Activated CD8-positive, alpha-beta T cell treated with anti-CD3 and anti-CD28 coated beads for 36 hours (primary cell): ENCODE measurements at regions of chr3 and their contacts with region 1.

Region 1: DNA sequence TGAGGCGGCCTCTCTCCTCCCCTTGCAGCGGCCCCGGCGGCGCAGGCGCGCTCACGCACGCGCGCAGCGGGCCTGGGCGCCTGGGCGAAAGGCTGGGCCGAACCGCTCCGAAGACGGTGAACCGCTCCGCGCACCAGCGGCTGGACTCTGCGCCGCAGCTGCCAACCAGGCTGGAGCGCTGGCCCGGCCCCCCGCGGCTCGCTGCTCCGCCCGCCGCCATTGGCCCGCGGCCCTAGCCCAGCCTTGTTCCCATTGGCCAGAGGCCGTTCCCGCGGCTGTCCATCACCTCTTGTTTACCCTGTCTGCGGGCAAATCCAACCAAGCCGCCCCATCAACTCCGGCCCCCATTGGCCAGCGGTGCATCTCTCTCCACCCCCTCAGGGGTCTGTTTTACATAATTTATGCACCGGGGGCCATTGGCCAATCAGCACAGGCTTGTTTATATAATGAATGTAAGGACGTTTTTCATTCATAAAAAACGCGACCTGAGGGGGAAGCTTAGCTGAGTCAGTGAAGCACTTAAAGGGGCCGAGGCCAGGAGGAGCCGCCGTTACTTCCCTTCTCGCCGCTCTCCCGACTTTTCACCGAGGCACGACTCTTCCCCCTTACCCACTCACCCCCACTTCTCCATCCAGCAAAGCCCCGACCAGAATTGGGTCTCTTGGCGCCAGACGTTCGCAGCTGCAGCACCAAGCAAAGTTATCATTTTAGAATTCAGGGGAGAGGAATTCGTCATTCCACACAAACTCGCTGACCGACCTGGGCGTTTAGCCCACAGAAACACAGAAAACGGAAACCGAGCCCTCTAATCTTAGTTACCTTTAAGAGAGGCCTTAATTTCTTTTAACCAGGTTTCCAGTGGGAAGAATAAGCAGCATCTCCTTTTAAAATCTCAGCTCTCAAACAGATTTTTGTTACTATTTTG is at the start of gene ETV5:
- DNase-seq: peak; percentile 98
- ATAC-seq: peak; percentile 97
- H3K4me3 Mint-ChIP-seq: peak within 1 kb of the TSS; percentile 89
- H3K27ac Mint-ChIP-seq: peak within 1 kb of the TSS; percentile 48
- H3K4me1 Mint-ChIP-seq: peaks cover 34% of the 10 kb centered on the region
- H3K27me3 Mint-ChIP-seq: peaks cover 78% of the 10 kb centered on the region
- CTCF ChIP-seq: no peak
- total RNA-seq, gene ETV5: 0.68 to 1.4 TPM

Region 2: DNA sequence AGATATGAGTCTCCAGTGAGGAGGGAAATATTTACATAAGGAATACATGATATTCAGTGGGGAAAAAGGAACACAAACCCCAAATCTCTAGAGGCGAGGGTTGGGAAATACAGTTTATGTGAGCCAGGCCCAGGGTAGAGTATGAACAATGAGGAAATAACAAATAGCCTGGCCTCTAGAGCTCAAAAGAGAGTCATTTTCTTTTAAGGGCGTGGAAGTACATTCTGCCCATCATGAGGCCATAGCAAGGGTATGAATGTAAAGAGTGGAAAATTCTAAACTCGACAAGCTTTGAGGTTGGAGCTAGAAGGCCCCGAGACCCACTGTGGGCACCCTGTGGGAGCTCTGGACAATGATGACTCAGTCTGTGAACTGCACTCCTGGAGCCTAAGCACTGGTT is 256.6 kb before region 1 on chr3:
- CTCF ChIA-PET with region 1: no interaction called
- POLR2A ChIA-PET with region 1: no interaction called
- intact Hi-C with region 1: no loop called
- DNase-seq: no peak
- ATAC-seq: no peak
- H3K4me3 Mint-ChIP-seq: no peak overlapping the region
- H3K27ac Mint-ChIP-seq: no peak overlapping the region
- H3K4me1 Mint-ChIP-seq: no peaks in the 10 kb centered on the region
- H3K27me3 Mint-ChIP-seq: peaks cover 2% of the 10 kb centered on the region
- CTCF ChIP-seq: no peak

Region 3: GRCh38 chr3:185958626-185959025 is 150.6 kb before region 1 on chr3:
- CTCF ChIA-PET with region 1: no interaction called
- POLR2A ChIA-PET with region 1: no interaction called
- intact Hi-C with region 1: no loop called
- DNase-seq: no peak
- ATAC-seq: no peak
- H3K4me3 Mint-ChIP-seq: no peak overlapping the region
- H3K27ac Mint-ChIP-seq: peak overlapping the region; percentile 21
- H3K4me1 Mint-ChIP-seq: peaks cover 2% of the 10 kb centered on the region
- H3K27me3 Mint-ChIP-seq: peaks cover 7% of the 10 kb centered on the region
- CTCF ChIP-seq: no peak

Region 4: GRCh38 chr3:186060222-186060621 is 49.0 kb before region 1 on chr3:
- CTCF ChIA-PET with region 1: no interaction called
- POLR2A ChIA-PET with region 1: no interaction called
- intact Hi-C with region 1: loop called (anchors 5 kb)
- DNase-seq: peak; percentile 81
- ATAC-seq: peak; percentile 95
- H3K4me3 Mint-ChIP-seq: no peak overlapping the region
- H3K27ac Mint-ChIP-seq: no peak overlapping the region
- H3K4me1 Mint-ChIP-seq: peaks cover 12% of the 10 kb centered on the region
- H3K27me3 Mint-ChIP-seq: peaks cover 48% of the 10 kb centered on the region
- CTCF ChIP-seq: no peak

Region 5: GRCh38 chr3:186132487-186132886 is 23.3 kb after region 1 on chr3:
- CTCF ChIA-PET with region 1: no interaction called
- POLR2A ChIA-PET with region 1: no interaction called
- intact Hi-C with region 1: no loop called
- DNase-seq: no peak
- ATAC-seq: no peak
- H3K4me3 Mint-ChIP-seq: no peak overlapping the region
- H3K27ac Mint-ChIP-seq: no peak overlapping the region
- H3K4me1 Mint-ChIP-seq: no peaks in the 10 kb centered on the region
- H3K27me3 Mint-ChIP-seq: peaks cover 4% of the 10 kb centered on the region
- CTCF ChIP-seq: no peak

Region 6: DNA sequence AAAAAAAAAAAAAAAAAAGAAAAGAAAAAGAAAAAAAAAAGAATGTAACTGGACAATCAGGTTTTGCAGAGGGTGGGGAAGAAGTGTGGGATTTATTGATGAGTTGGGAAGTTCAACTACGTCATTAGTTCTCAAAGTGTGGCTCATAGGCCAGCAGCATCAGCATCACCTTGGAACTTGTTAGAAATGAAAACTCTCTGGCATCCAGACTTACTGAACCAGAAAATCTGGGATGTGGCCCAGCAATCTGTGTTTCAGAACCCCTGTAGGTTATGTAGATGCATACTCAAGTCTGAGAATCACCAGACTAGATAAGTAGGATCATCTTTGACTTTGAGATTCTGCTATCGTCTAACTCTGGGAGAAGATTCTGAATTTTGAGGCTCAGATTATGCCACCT is 45.4 kb after region 1 on chr3:
- CTCF ChIA-PET with region 1: no interaction called
- POLR2A ChIA-PET with region 1: no interaction called
- intact Hi-C with region 1: no loop called
- DNase-seq: no peak
- ATAC-seq: no peak
- H3K4me3 Mint-ChIP-seq: no peak overlapping the region
- H3K27ac Mint-ChIP-seq: no peak overlapping the region
- H3K4me1 Mint-ChIP-seq: peaks cover 10% of the 10 kb centered on the region
- H3K27me3 Mint-ChIP-seq: peaks cover 27% of the 10 kb centered on the region
- CTCF ChIP-seq: no peak

Region 7: GRCh38 chr3:186241910-186242821 is 133.0 kb after region 1 on chr3:
- CTCF ChIA-PET with region 1: interaction called, 9 read pairs
- POLR2A ChIA-PET with region 1: no interaction called
- intact Hi-C with region 1: loop called (anchors 10 kb)
- DNase-seq: peak; percentile 87
- ATAC-seq: peak; percentile 99
- H3K4me3 Mint-ChIP-seq: peak overlapping the region; percentile 17
- H3K27ac Mint-ChIP-seq: no peak overlapping the region
- H3K4me1 Mint-ChIP-seq: peaks cover 6% of the 10 kb centered on the region
- H3K27me3 Mint-ChIP-seq: peaks cover 20% of the 10 kb centered on the region
- CTCF ChIP-seq: peak; percentile 64